ENCODE measurements at regions of chr2 and their contacts with region 1.

Region 1: DNA sequence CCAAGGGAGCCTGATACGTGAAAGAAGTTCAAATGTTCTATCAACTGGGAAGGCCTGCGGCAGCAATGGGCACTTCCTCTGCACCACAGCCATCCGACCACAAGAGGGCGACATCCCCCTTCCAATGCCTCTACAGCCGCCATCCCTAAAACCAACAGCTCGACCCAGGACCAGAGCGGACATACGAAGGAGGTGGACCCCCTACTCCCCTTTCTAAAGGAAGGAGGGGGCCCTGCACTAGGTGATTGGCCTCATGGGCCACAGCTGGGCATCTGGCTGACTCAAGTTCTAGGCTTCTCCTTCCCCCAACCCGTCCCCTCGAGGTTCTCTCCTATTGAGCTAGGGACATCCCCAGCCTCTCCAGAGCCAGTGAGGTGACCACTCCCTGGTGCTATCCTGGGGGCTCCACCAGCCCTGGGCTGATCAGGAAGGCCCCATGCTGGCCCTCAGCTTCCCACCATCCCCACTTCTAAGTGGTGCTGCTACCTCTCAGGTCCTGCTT is 217.2 kb downstream of the TNS1 start:
- DNase-seq: peak; percentile 85
- H3K4me3 Mint-ChIP-seq: no peak overlapping the region
- H3K27ac Mint-ChIP-seq: no peak overlapping the region
- H3K4me1 Mint-ChIP-seq: no peaks in the 10 kb centered on the region
- H3K27me3 Mint-ChIP-seq: peaks cover 40% of the 10 kb centered on the region
- CTCF ChIP-seq: peak; percentile 93

Region 2: GRCh38 chr2:217551252-217551899 is 234.2 kb before region 1 on chr2:
- CTCF ChIA-PET with region 1: no interaction called
- intact Hi-C with region 1: no loop called
- DNase-seq: no peak
- H3K4me3 Mint-ChIP-seq: no peak overlapping the region
- H3K27ac Mint-ChIP-seq: no peak overlapping the region
- H3K4me1 Mint-ChIP-seq: no peaks in the 10 kb centered on the region
- H3K27me3 Mint-ChIP-seq: peaks cover 25% of the 10 kb centered on the region
- CTCF ChIP-seq: no peak

Region 3: GRCh38 chr2:217774232-217774631 is 11.4 kb before region 1 on chr2:
- CTCF ChIA-PET with region 1: interaction called, 10 read pairs
- intact Hi-C with region 1: no loop called
- DNase-seq: no peak
- H3K4me3 Mint-ChIP-seq: no peak overlapping the region
- H3K27ac Mint-ChIP-seq: no peak overlapping the region
- H3K4me1 Mint-ChIP-seq: no peaks in the 10 kb centered on the region
- H3K27me3 Mint-ChIP-seq: peaks cover 40% of the 10 kb centered on the region
- CTCF ChIP-seq: no peak

Region 4: GRCh38 chr2:217836901-217837491 is 51.4 kb after region 1 on chr2:
- CTCF ChIA-PET with region 1: no interaction called
- intact Hi-C with region 1: no loop called
- DNase-seq: no peak
- H3K4me3 Mint-ChIP-seq: no peak overlapping the region
- H3K27ac Mint-ChIP-seq: no peak overlapping the region
- H3K4me1 Mint-ChIP-seq: no peaks in the 10 kb centered on the region
- H3K27me3 Mint-ChIP-seq: peaks cover 60% of the 10 kb centered on the region
- CTCF ChIP-seq: no peak

Region 5: DNA sequence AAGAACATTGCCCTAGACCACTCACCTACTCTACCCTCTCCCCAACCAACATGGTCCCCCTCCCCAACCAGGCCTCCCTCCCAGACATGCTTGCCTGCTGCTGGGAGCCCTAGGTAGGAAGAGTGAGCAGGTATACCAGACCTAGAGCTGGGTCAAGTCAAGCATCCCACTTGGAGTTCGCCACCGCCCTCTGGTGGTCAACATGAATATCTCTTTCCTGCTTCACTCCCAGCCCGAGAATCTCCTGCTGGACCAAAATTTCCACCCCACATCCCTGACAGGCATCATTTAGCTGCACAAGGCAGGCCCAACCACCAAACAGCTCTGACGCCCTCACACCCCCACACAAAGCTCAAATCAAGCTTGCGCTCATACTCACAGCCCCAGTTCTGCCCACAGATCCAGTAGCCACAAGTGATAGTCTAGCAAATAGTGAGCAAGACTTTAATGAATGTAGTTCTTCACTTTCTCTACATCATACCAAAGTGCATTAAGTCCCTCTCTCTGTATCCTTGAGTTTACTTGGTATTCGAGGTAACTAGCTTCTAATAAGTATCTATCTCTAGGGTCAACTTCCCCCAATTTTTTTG is 101.2 kb after region 1 on chr2:
- CTCF ChIA-PET with region 1: interaction called, 31 read pairs
- intact Hi-C with region 1: loop called (anchors 1 kb)
- DNase-seq: peak; percentile 85
- H3K4me3 Mint-ChIP-seq: no peak overlapping the region
- H3K27ac Mint-ChIP-seq: no peak overlapping the region
- H3K4me1 Mint-ChIP-seq: no peaks in the 10 kb centered on the region
- H3K27me3 Mint-ChIP-seq: peaks cover 65% of the 10 kb centered on the region
- CTCF ChIP-seq: peak; percentile 75

Region 6: GRCh38 chr2:217988014-217988839 is 202.6 kb after region 1 on chr2:
- CTCF ChIA-PET with region 1: interaction called, 32 read pairs
- intact Hi-C with region 1: loop called (anchors 1 kb)
- DNase-seq: peak; percentile 94
- H3K4me3 Mint-ChIP-seq: peak overlapping the region; percentile 51
- H3K27ac Mint-ChIP-seq: peak overlapping the region; percentile 63
- H3K4me1 Mint-ChIP-seq: peaks cover 29% of the 10 kb centered on the region
- H3K27me3 Mint-ChIP-seq: peaks cover 19% of the 10 kb centered on the region
- CTCF ChIP-seq: peak; percentile 81

Region 7: GRCh38 chr2:218033590-218034496 is 248.2 kb after region 1 on chr2:
- CTCF ChIA-PET with region 1: interaction called, 15 read pairs
- intact Hi-C with region 1: loop called (anchors 2 kb)
- DNase-seq: no peak
- H3K4me3 Mint-ChIP-seq: no peak overlapping the region
- H3K27ac Mint-ChIP-seq: no peak overlapping the region
- H3K4me1 Mint-ChIP-seq: no peaks in the 10 kb centered on the region
- H3K27me3 Mint-ChIP-seq: peaks cover 28% of the 10 kb centered on the region
- CTCF ChIP-seq: no peak

Measured in Calu3 (cell line).